ENCODE measurements at regions of chr10 and their contacts with region 1.

Region 1: DNA sequence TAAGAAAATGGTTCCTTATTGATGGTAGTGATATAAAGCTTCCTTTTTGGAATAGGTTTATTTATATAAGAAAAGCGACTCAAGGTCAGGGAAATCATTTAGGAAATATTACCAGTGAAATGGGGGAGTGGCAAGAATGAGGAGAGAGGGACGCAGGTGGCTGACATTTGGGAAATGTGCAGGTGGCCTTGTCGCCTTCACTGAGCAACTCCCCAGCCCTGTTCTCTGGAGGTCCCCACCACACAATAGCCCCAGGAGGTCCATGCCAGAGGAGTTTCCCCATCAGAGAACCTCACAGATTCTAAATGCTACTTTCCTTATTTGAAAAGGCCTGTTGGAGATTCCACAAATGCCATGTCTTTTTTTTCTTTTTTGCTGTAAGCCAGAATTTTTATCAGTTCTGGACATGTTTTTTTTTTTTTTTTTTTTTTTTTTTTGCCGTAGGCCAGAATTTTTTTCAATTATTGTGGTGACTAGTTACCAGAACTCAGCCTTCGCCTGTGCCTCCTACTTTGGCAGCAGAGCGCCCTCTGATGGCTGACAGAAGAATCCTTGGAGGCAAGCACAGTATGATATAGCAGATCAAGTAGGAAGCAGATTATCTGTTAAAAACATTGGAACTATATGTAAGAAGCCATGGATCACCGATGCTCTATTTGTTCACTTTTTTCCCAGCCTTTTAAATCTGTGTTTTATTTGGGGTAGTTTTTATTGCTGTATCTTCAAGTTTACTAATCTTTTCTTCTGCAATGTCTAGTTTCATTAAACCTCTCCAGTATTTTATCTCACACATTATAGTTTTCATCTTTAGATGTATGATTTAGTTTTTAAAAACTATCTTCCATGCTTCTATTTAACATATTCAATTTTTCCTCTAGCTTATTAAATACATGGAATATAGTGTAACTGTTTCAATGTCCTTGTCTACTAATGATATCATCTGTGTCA is 18.6 kb downstream of the OPALIN start:
- DNase-seq: peak; percentile 70
- ATAC-seq: peak; percentile 89
- H3K4me3 ChIP-seq: no peak overlapping the region
- H3K27ac ChIP-seq: no peak overlapping the region
- H3K4me1 ChIP-seq: no peaks in the 10 kb centered on the region
- H3K27me3 ChIP-seq: no peaks in the 10 kb centered on the region; the same call in none of the 2 replicates
- CTCF ChIP-seq: peak; percentile 68
- POLR2A ChIP-seq: no peak
- RAD21 ChIP-seq: peak; percentile 56

Region 2: DNA sequence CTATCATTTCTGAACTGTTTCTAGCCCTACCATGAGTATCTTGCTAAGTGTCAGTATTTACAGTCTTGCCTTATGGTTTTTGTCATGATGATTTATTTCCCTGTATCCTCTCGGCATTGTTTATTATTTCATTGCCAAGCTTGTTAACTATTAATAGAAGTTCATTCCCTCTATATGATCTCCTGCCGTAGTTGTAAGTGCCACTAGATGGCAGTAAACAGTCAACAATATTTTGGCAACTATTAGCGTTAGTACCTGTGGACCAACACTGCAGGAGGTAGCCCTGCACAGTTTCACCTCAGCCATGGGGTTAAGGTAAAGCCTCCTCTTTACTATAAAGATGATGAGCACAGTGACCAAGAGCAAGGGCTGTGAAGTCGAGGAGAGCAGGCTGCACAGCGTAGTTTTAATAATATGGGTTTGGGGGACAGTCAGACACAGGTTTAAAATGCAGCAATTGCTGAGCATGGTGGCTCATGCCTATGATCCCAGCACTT is 323.0 kb before region 1 on chr10:
- CTCF ChIA-PET with region 1: interaction called, 4 read pairs
- POLR2A ChIA-PET with region 1: no interaction called
- dilution Hi-C with region 1: no loop called
- in situ Hi-C with region 1: no loop called
- intact Hi-C with region 1: loop called (anchors 1 kb)
- DNase-seq: peak; percentile 54
- ATAC-seq: peak; percentile 89
- H3K4me3 ChIP-seq: no peak overlapping the region
- H3K27ac ChIP-seq: no peak overlapping the region
- H3K4me1 ChIP-seq: no peaks in the 10 kb centered on the region
- H3K27me3 ChIP-seq: peaks cover 8% of the 10 kb centered on the region
- CTCF ChIP-seq: peak; percentile 79
- POLR2A ChIP-seq: no peak
- RAD21 ChIP-seq: peak; percentile 73